Activated CD8-positive, alpha-beta T cell treated with anti-CD3 and anti-CD28 coated beads for 36 hours (primary cell): ENCODE measurements at regions of chr5 and their contacts with region 1.

Region 1: GRCh38 chr5:175729829-175730277 is 72.0 kb downstream of the HRH2 start:
- DNase-seq: peak; percentile 94
- ATAC-seq: peak; percentile 98
- H3K4me3 Mint-ChIP-seq: no peak overlapping the region
- H3K27ac Mint-ChIP-seq: no peak overlapping the region
- H3K4me1 Mint-ChIP-seq: peaks cover 5% of the 10 kb centered on the region
- H3K27me3 Mint-ChIP-seq: peaks cover 10% of the 10 kb centered on the region
- CTCF ChIP-seq: peak; percentile 93

Region 2: GRCh38 chr5:175609526-175609925 is 120.3 kb before region 1 on chr5:
- CTCF ChIA-PET with region 1: no interaction called
- POLR2A ChIA-PET with region 1: no interaction called
- intact Hi-C with region 1: no loop called
- DNase-seq: peak; percentile 44
- ATAC-seq: no peak
- H3K4me3 Mint-ChIP-seq: no peak overlapping the region
- H3K27ac Mint-ChIP-seq: no peak overlapping the region
- H3K4me1 Mint-ChIP-seq: peaks cover 17% of the 10 kb centered on the region
- H3K27me3 Mint-ChIP-seq: no peaks in the 10 kb centered on the region
- CTCF ChIP-seq: no peak

Region 3: GRCh38 chr5:175696139-175696854 is 33.6 kb before region 1 on chr5:
- CTCF ChIA-PET with region 1: interaction called, 16 read pairs
- POLR2A ChIA-PET with region 1: no interaction called
- intact Hi-C with region 1: no loop called
- DNase-seq: peak; percentile 89
- ATAC-seq: peak; percentile 91
- H3K4me3 Mint-ChIP-seq: no peak overlapping the region
- H3K27ac Mint-ChIP-seq: peak overlapping the region; percentile 78
- H3K4me1 Mint-ChIP-seq: peaks cover 28% of the 10 kb centered on the region
- H3K27me3 Mint-ChIP-seq: no peaks in the 10 kb centered on the region
- CTCF ChIP-seq: peak; percentile 88

Region 4: GRCh38 chr5:175709276-175709781 is 20.5 kb before region 1 on chr5:
- CTCF ChIA-PET with region 1: interaction called, 16 read pairs
- POLR2A ChIA-PET with region 1: no interaction called
- intact Hi-C with region 1: no loop called
- DNase-seq: no peak
- ATAC-seq: no peak
- H3K4me3 Mint-ChIP-seq: no peak overlapping the region
- H3K27ac Mint-ChIP-seq: no peak overlapping the region
- H3K4me1 Mint-ChIP-seq: peaks cover 3% of the 10 kb centered on the region
- H3K27me3 Mint-ChIP-seq: no peaks in the 10 kb centered on the region
- CTCF ChIP-seq: no peak

Region 5: GRCh38 chr5:175718401-175719108 is 11.3 kb before region 1 on chr5:
- CTCF ChIA-PET with region 1: interaction called, 56 read pairs
- POLR2A ChIA-PET with region 1: no interaction called
- intact Hi-C with region 1: no loop called
- DNase-seq: peak; percentile 91
- ATAC-seq: peak; percentile 79
- H3K4me3 Mint-ChIP-seq: no peak overlapping the region
- H3K27ac Mint-ChIP-seq: no peak overlapping the region
- H3K4me1 Mint-ChIP-seq: peaks cover 5% of the 10 kb centered on the region
- H3K27me3 Mint-ChIP-seq: no peaks in the 10 kb centered on the region
- CTCF ChIP-seq: peak; percentile 84

Region 6: GRCh38 chr5:175741556-175741955 is 11.7 kb after region 1 on chr5:
- CTCF ChIA-PET with region 1: interaction called, 14 read pairs
- POLR2A ChIA-PET with region 1: interaction called, 3 read pairs
- intact Hi-C with region 1: no loop called
- DNase-seq: no peak
- ATAC-seq: no peak
- H3K4me3 Mint-ChIP-seq: no peak overlapping the region
- H3K27ac Mint-ChIP-seq: no peak overlapping the region
- H3K4me1 Mint-ChIP-seq: no peaks in the 10 kb centered on the region
- H3K27me3 Mint-ChIP-seq: peaks cover 29% of the 10 kb centered on the region
- CTCF ChIP-seq: no peak

Region 7: GRCh38 chr5:175796536-175797499 is 67.0 kb after region 1 on chr5:
- CTCF ChIA-PET with region 1: interaction called, 11 read pairs
- POLR2A ChIA-PET with region 1: no interaction called
- intact Hi-C with region 1: no loop called
- DNase-seq: peak; percentile 86
- ATAC-seq: peak; percentile 100
- H3K4me3 Mint-ChIP-seq: no peak overlapping the region
- H3K27ac Mint-ChIP-seq: no peak overlapping the region
- H3K4me1 Mint-ChIP-seq: peaks cover 8% of the 10 kb centered on the region
- H3K27me3 Mint-ChIP-seq: peaks cover 64% of the 10 kb centered on the region
- CTCF ChIP-seq: no peak

Region 8: DNA sequence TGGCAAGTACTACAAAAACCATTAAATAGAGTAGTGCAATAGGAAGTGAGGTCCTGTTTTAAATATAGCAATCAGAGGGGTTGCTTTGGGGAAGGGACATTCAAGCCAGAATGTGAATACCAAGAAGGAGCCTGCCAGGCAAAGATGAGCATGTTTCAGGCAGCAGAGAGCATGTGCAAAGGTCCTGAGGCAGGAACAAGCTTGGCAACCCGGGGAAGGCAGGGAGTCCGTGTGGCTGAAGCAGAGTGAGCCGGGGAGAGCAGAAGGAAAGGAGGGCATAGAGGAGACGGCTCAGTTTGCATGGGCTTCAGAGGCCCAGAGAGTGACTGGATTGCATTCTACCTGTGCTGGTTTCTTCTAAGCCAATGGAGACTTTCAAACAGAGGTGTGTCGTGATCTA is 118.8 kb after region 1 on chr5:
- CTCF ChIA-PET with region 1: no interaction called
- POLR2A ChIA-PET with region 1: no interaction called
- intact Hi-C with region 1: no loop called
- DNase-seq: no peak
- ATAC-seq: no peak
- H3K4me3 Mint-ChIP-seq: no peak overlapping the region
- H3K27ac Mint-ChIP-seq: no peak overlapping the region
- H3K4me1 Mint-ChIP-seq: no peaks in the 10 kb centered on the region
- H3K27me3 Mint-ChIP-seq: no peaks in the 10 kb centered on the region
- CTCF ChIP-seq: no peak